ENCODE measurements at regions of chr10 and their contacts with region 1.

Region 1: GRCh38 chr10:8325024-8325980 is 270.8 kb downstream of the GATA3 start:
- DNase-seq: peak; percentile 42
- H3K4me3 Mint-ChIP-seq: peak overlapping the region; percentile 40
- H3K27ac Mint-ChIP-seq: peak overlapping the region; percentile 93
- H3K4me1 Mint-ChIP-seq: peaks cover 78% of the 10 kb centered on the region
- H3K27me3 Mint-ChIP-seq: no peaks in the 10 kb centered on the region

Region 2: GRCh38 chr10:8059959-8060703 is 265.2 kb before region 1 on chr10:
- intact Hi-C with region 1: loop called (anchors 2 kb)
- DNase-seq: peak; percentile 81
- H3K4me3 Mint-ChIP-seq: peak overlapping the region; percentile 92
- H3K27ac Mint-ChIP-seq: peak overlapping the region; percentile 94
- H3K4me1 Mint-ChIP-seq: peaks cover 50% of the 10 kb centered on the region
- H3K27me3 Mint-ChIP-seq: no peaks in the 10 kb centered on the region

Region 3: DNA sequence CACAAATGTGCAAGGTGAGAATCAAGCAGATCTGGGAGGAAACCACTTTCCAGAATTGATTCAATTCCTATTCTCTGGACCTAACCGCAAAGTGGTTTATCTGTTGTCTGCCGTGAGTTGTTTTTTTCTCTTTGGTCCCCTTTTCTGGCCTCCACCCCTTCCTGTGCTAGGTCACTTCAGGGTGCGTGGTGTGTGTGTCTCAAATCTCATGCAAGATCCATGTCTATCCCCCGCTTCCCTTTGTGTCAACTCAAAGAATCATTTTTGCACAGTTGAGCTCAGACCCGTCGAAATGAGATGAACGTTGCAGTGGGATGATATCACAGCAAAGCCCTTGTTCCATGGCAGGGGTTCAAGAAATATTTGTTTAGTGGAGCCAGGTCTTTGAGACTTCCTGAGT is 86.3 kb before region 1 on chr10:
- intact Hi-C with region 1: loop called (anchors 1 kb)
- DNase-seq: peak; percentile 52
- H3K4me3 Mint-ChIP-seq: peak overlapping the region; percentile 24
- H3K27ac Mint-ChIP-seq: peak overlapping the region; percentile 69
- H3K4me1 Mint-ChIP-seq: peaks cover 61% of the 10 kb centered on the region
- H3K27me3 Mint-ChIP-seq: no peaks in the 10 kb centered on the region

Region 4: GRCh38 chr10:8254350-8254749 is 71.0 kb before region 1 on chr10:
- intact Hi-C with region 1: loop called (anchors 1 kb)
- DNase-seq: no peak
- H3K4me3 Mint-ChIP-seq: peak overlapping the region; percentile 18
- H3K27ac Mint-ChIP-seq: peak overlapping the region; percentile 84
- H3K4me1 Mint-ChIP-seq: peaks cover 42% of the 10 kb centered on the region
- H3K27me3 Mint-ChIP-seq: no peaks in the 10 kb centered on the region

Region 5: GRCh38 chr10:8365935-8366911 is 40.9 kb after region 1 on chr10:
- intact Hi-C with region 1: loop called (anchors 1 kb)
- DNase-seq: peak; percentile 46
- H3K4me3 Mint-ChIP-seq: peak overlapping the region; percentile 64
- H3K27ac Mint-ChIP-seq: peak overlapping the region; percentile 98
- H3K4me1 Mint-ChIP-seq: peaks cover 69% of the 10 kb centered on the region
- H3K27me3 Mint-ChIP-seq: no peaks in the 10 kb centered on the region

Region 6: GRCh38 chr10:9018195-9019173 is 693.2 kb after region 1 on chr10:
- intact Hi-C with region 1: loop called (anchors 2 kb)
- DNase-seq: no peak
- H3K4me3 Mint-ChIP-seq: peak overlapping the region; percentile 80
- H3K27ac Mint-ChIP-seq: peak overlapping the region; percentile 94
- H3K4me1 Mint-ChIP-seq: peaks cover 72% of the 10 kb centered on the region
- H3K27me3 Mint-ChIP-seq: no peaks in the 10 kb centered on the region

Measured in activated T-helper 2 cell treated with anti-CD3 and anti-CD28 coated beads, Interferon-gamma antibody, Interleukin-2, Interleukin-4, amounts not matched to agents 10 μg/mL and 5 μg/mL and 100 μg/mL, durations not matched to agents 14 hours and 24 hours and 36 hours (primary cell).